Activated T-helper 2 cell treated with anti-CD3 and anti-CD28 coated beads, Interferon-gamma antibody, Interleukin-2, Interleukin-4, amounts not matched to agents 10 μg/mL and 5 μg/mL and 100 μg/mL, durations not matched to agents 14 hours and 24 hours and 36 hours (primary cell): ENCODE measurements at regions of chr6 and their contacts with region 1.

Region 1: GRCh38 chr6:24899997-24900325 is 35.8 kb downstream of the RIPOR2 start:
- DNase-seq: no peak
- H3K4me3 Mint-ChIP-seq: peak overlapping the region; percentile 31
- H3K27ac Mint-ChIP-seq: peak overlapping the region; percentile 66
- H3K4me1 Mint-ChIP-seq: peaks cover 43% of the 10 kb centered on the region
- H3K27me3 Mint-ChIP-seq: no peaks in the 10 kb centered on the region

Region 2: DNA sequence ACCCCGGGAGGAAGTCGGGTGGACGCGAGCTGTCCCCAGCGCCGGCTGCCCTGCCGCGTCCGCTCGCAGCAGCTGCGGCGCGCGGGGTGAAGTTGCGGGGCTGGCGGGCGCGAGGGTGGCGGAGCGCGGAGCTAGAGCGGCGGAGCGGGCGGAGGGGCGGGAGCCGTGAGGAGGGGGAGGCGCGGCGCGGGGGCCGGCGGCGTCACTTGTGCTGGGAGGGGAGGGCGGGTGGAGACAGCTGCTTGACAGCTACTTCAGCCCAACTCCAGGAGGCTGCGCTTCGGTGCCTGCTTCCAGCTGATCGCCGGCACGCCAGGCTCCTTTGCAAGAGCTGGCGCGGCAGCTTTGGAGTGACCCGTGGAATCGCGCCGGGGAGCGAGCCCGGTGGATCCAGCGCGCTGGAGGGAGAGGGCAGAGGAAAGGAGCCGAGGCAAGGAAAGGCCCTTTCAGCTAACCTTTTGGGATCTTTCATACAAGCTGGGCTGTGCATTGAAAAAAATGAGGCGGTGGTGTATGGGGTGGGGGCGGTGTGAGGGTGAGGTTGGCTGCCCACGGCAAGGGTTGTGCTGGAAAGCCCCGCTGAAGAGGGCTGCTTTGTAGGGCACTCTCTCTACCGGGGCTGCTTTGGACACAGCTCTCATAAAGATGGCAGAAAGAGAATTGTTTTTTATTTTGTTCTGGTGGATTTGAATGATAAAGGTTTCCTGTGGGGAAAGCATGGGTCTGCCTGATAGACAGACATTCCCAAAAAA is 11.2 kb after region 1 on chr6:
- intact Hi-C with region 1: loop called (anchors 1 kb)
- DNase-seq: no peak
- H3K4me3 Mint-ChIP-seq: peak overlapping the region; percentile 79
- H3K27ac Mint-ChIP-seq: peak overlapping the region; percentile 61
- H3K4me1 Mint-ChIP-seq: peaks cover 70% of the 10 kb centered on the region
- H3K27me3 Mint-ChIP-seq: no peaks in the 10 kb centered on the region